Astrocyte of the cerebellum (primary cell): ENCODE measurements at regions of chr17 and their contacts with region 1.

Region 1: GRCh38 chr17:8574687-8575086 is 55.8 kb downstream of the MYH10 start:
- DNase-seq: no peak
- H3K4me3 ChIP-seq: no peak overlapping the region
- CTCF ChIP-seq: peak; percentile 21

Region 2: DNA sequence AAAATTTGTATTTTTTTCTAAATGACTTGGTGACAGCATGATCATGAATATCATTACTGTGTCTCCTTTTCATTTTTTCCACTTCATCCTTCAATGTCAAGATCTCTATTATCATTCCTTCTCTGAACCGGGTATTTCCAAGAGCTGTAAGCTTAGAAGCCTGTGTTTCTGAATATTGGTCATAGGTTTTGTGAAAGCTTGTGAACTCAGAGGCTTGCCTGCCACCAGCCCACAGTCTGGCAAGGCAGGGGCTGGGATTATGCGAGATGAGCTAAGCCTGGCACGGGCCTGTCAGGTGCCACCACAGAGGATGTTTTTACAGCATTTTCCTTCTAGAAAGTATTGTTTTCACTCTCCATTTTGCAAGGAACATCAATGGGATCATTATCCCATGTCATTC is 37.0 kb before region 1 on chr17:
- in situ Hi-C with region 1: loop called (anchors 5 kb)
- DNase-seq: no peak
- H3K4me3 ChIP-seq: no peak overlapping the region
- CTCF ChIP-seq: no peak

Region 3: GRCh38 chr17:8611619-8612298 is 37.1 kb after region 1 on chr17:
- in situ Hi-C with region 1: loop called (anchors 5 kb)
- DNase-seq: no peak
- H3K4me3 ChIP-seq: no peak overlapping the region
- CTCF ChIP-seq: no peak